ENCODE measurements at regions of chr10 and their contacts with region 1.

Region 1: DNA sequence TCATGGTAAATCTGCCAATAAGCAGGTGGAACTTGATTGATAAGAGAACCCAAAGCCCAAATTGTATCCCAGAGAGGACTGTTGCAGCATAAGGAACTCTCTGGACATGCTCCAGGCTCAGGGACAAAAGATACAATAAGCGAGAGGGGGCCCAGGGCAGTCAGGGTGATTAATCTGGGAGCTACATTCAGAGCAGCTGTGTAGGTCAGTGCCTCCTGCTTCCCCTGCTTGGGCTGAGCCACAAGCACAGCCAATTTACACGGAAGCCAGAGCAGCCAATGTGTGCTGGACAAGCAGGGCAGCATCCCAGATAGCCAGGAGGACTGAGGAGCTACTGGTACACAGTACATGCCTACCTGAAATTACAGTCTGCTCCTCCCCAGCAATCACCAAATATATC is 24.2 kb downstream of the MYPN start:
- DNase-seq: no peak
- H3K4me3 ChIP-seq: no peak overlapping the region
- H3K27ac ChIP-seq: no peak overlapping the region
- H3K4me1 ChIP-seq: peaks cover 19% of the 10 kb centered on the region
- H3K27me3 ChIP-seq: no peaks in the 10 kb centered on the region
- CTCF ChIP-seq: no peak

Region 2: GRCh38 chr10:68112837-68113236 is 20.7 kb before region 1 on chr10:
- CTCF ChIA-PET with region 1: no interaction called
- POLR2A ChIA-PET with region 1: interaction called, 10 read pairs
- intact Hi-C with region 1: no loop called
- DNase-seq: no peak
- H3K4me3 ChIP-seq: no peak overlapping the region
- H3K27ac ChIP-seq: no peak overlapping the region
- H3K4me1 ChIP-seq: peaks cover 9% of the 10 kb centered on the region
- H3K27me3 ChIP-seq: no peaks in the 10 kb centered on the region
- CTCF ChIP-seq: no peak

Measured in A673 (cell line).